Transverse colon (tissue), 4 donors: ENCODE measurements at regions of chr1 and their contacts with region 1.

Region 1: GRCh38 chr1:102045752-102046151 is 49.0 kb upstream of the OLFM3 start:
- DNase-seq: peak; percentile 69
- H3K4me3 ChIP-seq: no peak overlapping the region
- H3K27ac ChIP-seq: peak overlapping the region; percentile 45 to 70 (median 66)
- H3K4me1 ChIP-seq: peaks cover 0 to 10% (median 2%) of the 10 kb centered on the region in 4 donors
- H3K27me3 ChIP-seq: no peaks in the 10 kb centered on the region
- CTCF ChIP-seq: no peak
- EP300 ChIP-seq: peak; percentile 9
- POLR2A ChIP-seq: no peak

Region 2: GRCh38 chr1:103960710-103961109 is 1915.0 kb after region 1 on chr1:
- in situ Hi-C with region 1: no loop called
- intact Hi-C with region 1: loop called (anchors 10 kb)
- DNase-seq: no peak
- H3K4me3 ChIP-seq: no peak overlapping the region
- H3K27ac ChIP-seq: no peak overlapping the region
- H3K4me1 ChIP-seq: no peaks in the 10 kb centered on the region
- H3K27me3 ChIP-seq: no peaks in the 10 kb centered on the region
- CTCF ChIP-seq: no peak
- EP300 ChIP-seq: no peak
- POLR2A ChIP-seq: no peak